ENCODE measurements at regions of chr2 and their contacts with region 1.

Region 1: GRCh38 chr2:27771548-27772335 is at the start of gene MRPL33:
- DNase-seq: peak; percentile 98
- H3K4me3 ChIP-seq: peak within 1 kb of the TSS; percentile 58 to 91 (median 73)
- H3K27ac ChIP-seq: peak within 1 kb of the TSS; percentile 84 to 96 (median 94)
- H3K4me1 ChIP-seq: peaks cover 0 to 52% (median 45%) of the 10 kb centered on the region in 4 donors
- H3K27me3 ChIP-seq: no peaks in the 10 kb centered on the region
- CTCF ChIP-seq: no peak
- EP300 ChIP-seq: peak in 1 of 4 donors; percentile 69
- POLR2A ChIP-seq: peak; percentile 71 to 86
- total RNA-seq, gene MRPL33: 178 to 324 (median 239) TPM

Region 2: DNA sequence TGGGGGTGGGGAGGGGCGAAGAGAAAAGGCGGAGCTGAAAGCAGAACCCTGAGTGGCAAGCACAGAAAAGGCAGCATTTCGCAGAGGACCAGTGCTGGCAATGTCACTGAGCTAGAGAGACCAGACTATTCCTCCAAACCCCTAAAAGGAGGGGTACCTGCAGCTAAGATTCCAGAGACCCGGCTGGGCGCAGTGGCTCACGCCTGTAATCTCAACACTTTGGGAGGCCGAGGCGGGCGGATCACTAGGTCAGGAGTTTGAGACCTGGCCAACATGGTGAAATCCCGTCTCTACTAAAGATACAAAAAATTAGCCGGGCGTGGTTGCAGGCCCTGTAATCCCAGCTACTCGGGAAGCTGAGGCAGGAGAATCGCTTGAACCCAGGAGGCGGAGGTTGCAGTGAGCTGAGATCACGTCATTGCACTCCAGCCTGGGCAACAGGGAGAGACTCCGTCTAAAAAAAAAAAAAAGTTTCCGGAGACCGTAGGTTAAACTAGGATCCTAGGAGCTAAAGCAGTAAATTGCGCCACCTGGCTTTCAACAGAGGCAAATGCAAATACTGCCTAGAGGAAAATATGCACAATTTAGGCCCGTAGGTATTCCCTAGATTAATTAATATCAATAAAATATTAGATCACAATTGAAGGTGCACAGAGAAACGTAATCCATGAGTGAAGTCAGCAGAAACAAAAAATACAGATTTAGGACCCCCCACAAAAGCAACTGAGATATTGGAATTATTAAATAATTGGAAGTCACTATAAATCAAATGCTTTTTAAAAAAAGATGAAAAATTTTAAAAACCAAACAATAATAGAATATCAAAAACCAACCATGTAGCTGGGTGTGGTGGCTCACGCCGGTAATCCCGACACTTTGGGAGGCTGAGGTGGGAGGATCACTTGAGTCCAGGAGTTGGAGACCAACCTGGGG is 468.4 kb before region 1 on chr2:
- intact Hi-C with region 1: no loop called
- DNase-seq: no peak
- H3K4me3 ChIP-seq: peak overlapping the region; percentile 6 to 27 (median 24)
- H3K27ac ChIP-seq: no peak overlapping the region
- H3K4me1 ChIP-seq: peaks cover 0 to 28% (median 22%) of the 10 kb centered on the region in 4 donors
- H3K27me3 ChIP-seq: peaks cover 26 to 42% (median 39%) of the 10 kb centered on the region in 3 donors
- CTCF ChIP-seq: peak; percentile 39 to 83 (median 70)
- EP300 ChIP-seq: no peak
- POLR2A ChIP-seq: no peak

Region 3: DNA sequence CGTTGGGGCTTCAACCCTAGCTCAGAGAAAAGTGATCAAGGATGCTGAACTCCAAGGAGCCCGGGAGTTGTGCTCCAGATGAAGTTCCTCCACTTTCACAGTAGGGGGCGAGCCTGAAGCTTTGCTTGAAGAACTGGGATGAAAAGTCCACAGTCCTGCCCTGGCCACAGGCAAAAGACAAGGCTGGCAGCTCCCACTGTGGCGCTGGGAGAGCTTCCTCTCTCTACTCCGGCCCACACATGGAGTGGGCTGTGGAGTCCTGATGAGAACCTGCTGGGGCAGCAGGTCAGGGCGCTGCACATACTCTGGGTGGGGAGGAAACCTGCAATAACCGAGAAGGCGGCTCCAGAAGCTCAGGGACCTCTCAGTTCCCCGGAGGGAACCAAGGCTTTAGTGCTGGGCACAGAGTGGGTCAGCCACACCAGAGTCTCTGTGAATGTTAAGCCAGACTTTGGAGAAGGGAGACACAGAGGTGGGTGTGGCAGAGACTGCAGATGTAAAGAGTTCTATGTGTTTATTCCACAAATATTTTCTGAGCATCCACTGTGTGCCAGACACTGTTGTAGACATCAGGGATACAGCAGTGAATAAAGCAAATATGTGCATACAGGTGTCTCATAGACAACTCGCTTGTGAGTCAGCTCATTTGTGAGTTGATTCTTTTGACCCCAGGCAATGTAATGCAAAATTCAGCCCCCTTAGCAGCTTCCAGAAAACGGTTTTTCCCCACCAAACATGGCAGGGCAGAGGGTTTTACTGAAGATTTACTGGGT is 48.2 kb before region 1 on chr2:
- intact Hi-C with region 1: loop called (anchors 5 kb)
- DNase-seq: peak; percentile 88
- H3K4me3 ChIP-seq: no peak overlapping the region
- H3K27ac ChIP-seq: peak overlapping the region; percentile 54 to 83 (median 74)
- H3K4me1 ChIP-seq: peaks cover 0 to 26% (median 20%) of the 10 kb centered on the region in 4 donors
- H3K27me3 ChIP-seq: no peaks in the 10 kb centered on the region
- CTCF ChIP-seq: peak; percentile 58 to 84 (median 81)
- EP300 ChIP-seq: no peak
- POLR2A ChIP-seq: no peak

Region 4: DNA sequence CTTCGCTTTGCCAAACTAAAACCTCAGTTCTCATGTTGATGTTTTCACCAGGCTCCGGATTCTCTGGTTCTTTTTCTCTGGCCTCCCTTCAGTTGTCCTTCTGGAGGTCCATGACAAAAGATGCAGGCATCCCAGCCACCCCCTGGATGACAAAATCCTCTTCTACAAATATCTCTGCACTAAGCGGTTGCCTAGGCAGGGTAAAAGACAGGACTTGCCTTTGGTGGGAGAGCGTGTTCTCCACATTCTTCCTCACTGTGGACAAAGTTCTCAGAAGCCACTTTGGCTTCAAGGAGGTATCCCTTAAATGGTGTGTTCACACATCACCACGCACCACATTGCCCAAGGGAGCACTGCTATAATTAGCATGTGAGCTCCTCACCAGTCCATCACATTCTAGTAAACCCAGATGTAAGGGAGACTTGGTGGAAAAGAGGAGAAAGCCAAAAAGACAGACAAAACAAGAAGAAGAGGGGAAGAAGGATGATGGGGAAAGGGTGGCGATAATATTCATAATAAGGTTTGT is 23.9 kb before region 1 on chr2:
- intact Hi-C with region 1: no loop called
- DNase-seq: no peak
- H3K4me3 ChIP-seq: no peak overlapping the region
- H3K27ac ChIP-seq: no peak overlapping the region
- H3K4me1 ChIP-seq: no peaks in the 10 kb centered on the region
- H3K27me3 ChIP-seq: no peaks in the 10 kb centered on the region
- CTCF ChIP-seq: no peak
- EP300 ChIP-seq: no peak
- POLR2A ChIP-seq: no peak

Region 5: DNA sequence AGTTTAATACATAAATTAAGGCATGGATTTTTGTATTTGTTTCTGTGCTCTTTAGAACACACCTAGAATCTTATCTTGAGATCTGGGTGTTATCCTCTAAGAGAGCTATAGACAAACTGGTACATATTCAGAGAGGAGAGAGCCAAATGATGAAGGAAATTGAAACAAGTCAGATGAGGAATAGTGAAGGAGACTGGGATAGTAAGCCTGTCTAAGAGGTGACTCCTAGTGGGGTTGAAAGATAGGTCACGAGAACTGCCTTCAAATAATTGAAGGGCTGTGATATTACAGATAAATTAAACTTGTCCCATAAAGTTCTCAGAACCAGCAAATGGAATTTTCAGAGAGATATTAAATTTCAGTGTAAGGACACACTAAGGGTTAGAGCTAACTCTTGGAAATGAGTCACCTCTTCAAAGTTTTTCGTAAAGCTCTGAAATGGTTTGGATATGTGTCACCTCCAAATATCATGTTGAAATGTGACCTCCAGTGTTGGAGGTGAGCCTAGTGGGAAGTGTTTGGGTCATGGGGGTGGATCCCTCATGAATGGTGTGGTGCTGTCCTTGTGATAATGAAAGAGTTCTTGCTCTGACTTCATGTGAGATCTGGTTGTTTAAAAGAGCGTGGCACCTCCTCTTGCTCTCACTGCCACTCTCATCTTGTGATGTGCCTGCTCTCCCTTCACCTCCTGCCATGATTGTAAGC is 206.0 kb after region 1 on chr2:
- intact Hi-C with region 1: no loop called
- DNase-seq: no peak
- H3K4me3 ChIP-seq: no peak overlapping the region
- H3K27ac ChIP-seq: no peak overlapping the region
- H3K4me1 ChIP-seq: peaks cover 0 to 8% (median 0%) of the 10 kb centered on the region in 4 donors
- H3K27me3 ChIP-seq: no peaks in the 10 kb centered on the region
- CTCF ChIP-seq: no peak
- EP300 ChIP-seq: no peak
- POLR2A ChIP-seq: no peak

Region 6: GRCh38 chr2:28164280-28164801 is 392.6 kb after region 1 on chr2:
- intact Hi-C with region 1: loop called (anchors 10 kb)
- DNase-seq: peak; percentile 67
- H3K4me3 ChIP-seq: peak overlapping the region in 1 of 4 donors; percentile 3
- H3K27ac ChIP-seq: peak overlapping the region; percentile 51 to 86 (median 76)
- H3K4me1 ChIP-seq: peaks cover 0 to 43% (median 39%) of the 10 kb centered on the region in 4 donors
- H3K27me3 ChIP-seq: no peaks in the 10 kb centered on the region
- CTCF ChIP-seq: no peak
- EP300 ChIP-seq: peak in 2 of 4 donors; percentile 34 to 86
- POLR2A ChIP-seq: no peak

Region 7: DNA sequence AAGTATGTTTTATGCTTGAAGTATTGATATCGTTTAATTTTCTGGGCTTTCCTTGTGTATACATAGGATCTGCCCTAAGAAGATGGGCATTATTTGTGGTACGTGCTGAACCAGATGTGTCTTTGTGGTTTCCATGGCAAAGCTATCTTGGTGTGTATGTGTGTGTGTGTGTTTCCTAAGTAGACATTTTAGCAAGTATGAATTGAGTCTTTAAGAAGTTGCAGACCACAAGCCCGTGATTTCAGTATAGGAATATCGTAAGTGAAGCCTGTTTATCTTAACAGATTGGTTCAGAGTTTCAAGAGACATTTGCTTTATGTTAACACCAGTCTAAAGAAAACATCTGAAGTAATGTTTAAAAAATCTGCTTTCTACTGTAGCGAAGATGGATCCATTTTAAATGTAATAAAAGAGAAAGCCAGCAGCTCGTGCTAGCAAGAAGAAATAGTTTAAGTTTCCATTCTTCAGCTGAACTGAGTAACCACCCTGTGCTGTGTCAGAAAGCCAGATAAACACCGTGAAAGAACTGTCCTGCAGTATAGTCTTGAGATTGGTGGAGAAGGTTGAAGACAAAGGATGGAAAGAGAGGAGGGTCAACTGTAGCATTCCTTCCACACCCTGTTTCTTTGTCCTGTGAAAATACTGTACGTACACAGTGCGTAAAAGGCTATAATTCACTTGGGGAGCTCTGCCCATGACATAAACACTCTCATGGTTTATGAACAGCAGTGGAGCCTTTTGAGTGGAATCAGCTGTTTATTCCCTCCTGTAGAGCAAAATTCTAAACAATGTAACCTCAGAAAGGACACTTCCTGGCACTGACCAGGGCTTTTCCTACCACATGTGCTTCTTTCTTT is 529.0 kb after region 1 on chr2:
- intact Hi-C with region 1: loop called (anchors 5 kb)
- DNase-seq: peak; percentile 77
- H3K4me3 ChIP-seq: peak overlapping the region; percentile 13 to 36 (median 26)
- H3K27ac ChIP-seq: peak overlapping the region; percentile 72 to 89 (median 82)
- H3K4me1 ChIP-seq: peaks cover 0 to 20% (median 19%) of the 10 kb centered on the region in 4 donors
- H3K27me3 ChIP-seq: no peaks in the 10 kb centered on the region
- CTCF ChIP-seq: no peak
- EP300 ChIP-seq: peak; percentile 86 to 97 (median 96)
- POLR2A ChIP-seq: no peak

Measured in sigmoid colon (tissue), 7 donors.